HCT116 (cell line): ENCODE measurements at regions of chr3 and their contacts with region 1.

Region 1: GRCh38 chr3:19866751-19867347 is 67.2 kb downstream of the EFHB start:
- DNase-seq: peak; percentile 24
- ATAC-seq: peak; percentile 88
- H3K4me3 ChIP-seq: no peak overlapping the region
- H3K27ac ChIP-seq: no peak overlapping the region
- H3K4me1 ChIP-seq: no peaks in the 10 kb centered on the region
- H3K27me3 ChIP-seq: peaks cover 16% of the 10 kb centered on the region; the same call in 1 of the 2 replicates
- CTCF ChIP-seq: peak; percentile 57 to 87 (median 74); a peak in 5 of 6 replicates
- POLR2A ChIP-seq: no peak
- RAD21 ChIP-seq: peak; percentile 81

Region 2: DNA sequence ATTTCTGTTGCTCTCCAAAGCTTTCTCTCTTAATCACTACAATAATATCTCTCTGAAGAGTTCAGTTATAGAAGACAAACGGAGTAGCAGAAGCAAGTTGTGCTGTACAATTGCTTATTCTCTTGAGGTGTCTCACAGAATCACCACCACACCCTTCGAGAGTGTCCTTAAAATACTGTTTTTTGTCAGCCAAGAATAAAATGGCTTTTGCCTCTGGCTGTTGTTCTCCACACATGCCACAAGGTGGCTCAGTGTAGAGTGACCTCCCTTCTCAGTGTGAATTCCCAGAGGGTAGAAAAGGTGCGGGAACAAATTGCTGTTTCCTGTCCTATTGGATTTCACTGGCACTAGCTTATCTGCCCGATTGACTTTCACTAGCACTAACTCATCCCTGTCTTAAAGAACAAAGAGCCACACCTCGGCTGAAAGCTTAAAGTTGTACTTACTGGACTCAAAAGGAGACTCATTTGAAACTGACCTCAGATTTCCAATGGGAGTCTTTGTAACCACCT is 1307.5 kb before region 1 on chr3:
- CTCF ChIA-PET with region 1: no interaction called
- POLR2A ChIA-PET with region 1: no interaction called
- RAD21 ChIA-PET with region 1: no interaction called
- intact Hi-C with region 1: loop called (anchors 1 kb)
- DNase-seq: peak; percentile 21
- ATAC-seq: peak; percentile 73
- H3K4me3 ChIP-seq: no peak overlapping the region
- H3K27ac ChIP-seq: no peak overlapping the region
- H3K4me1 ChIP-seq: no peaks in the 10 kb centered on the region
- H3K27me3 ChIP-seq: peaks cover 14% of the 10 kb centered on the region; the same call in 1 of the 2 replicates
- CTCF ChIP-seq: peak; percentile 32 to 64 (median 63); a peak in 4 of 6 replicates
- POLR2A ChIP-seq: no peak
- RAD21 ChIP-seq: peak; percentile 47

Region 3: GRCh38 chr3:18847583-18848197 is 1019.2 kb before region 1 on chr3:
- CTCF ChIA-PET with region 1: interaction called, 3 read pairs
- POLR2A ChIA-PET with region 1: no interaction called
- RAD21 ChIA-PET with region 1: no interaction called
- intact Hi-C with region 1: loop called (anchors 5 kb)
- DNase-seq: peak; percentile 6
- ATAC-seq: peak; percentile 74
- H3K4me3 ChIP-seq: no peak overlapping the region
- H3K27ac ChIP-seq: no peak overlapping the region
- H3K4me1 ChIP-seq: no peaks in the 10 kb centered on the region
- H3K27me3 ChIP-seq: no peaks in the 10 kb centered on the region
- CTCF ChIP-seq: peak in 2 of 3 experiments; percentile 29 to 50; a peak in 3 of 6 replicates
- POLR2A ChIP-seq: no peak
- RAD21 ChIP-seq: 0 out of 2 replicates have a peak, but pooled peaks have one; percentile 8

Region 4: GRCh38 chr3:19046440-19046839 is 820.4 kb before region 1 on chr3:
- CTCF ChIA-PET with region 1: no interaction called
- POLR2A ChIA-PET with region 1: no interaction called
- RAD21 ChIA-PET with region 1: no interaction called
- intact Hi-C with region 1: loop called (anchors 5 kb)
- DNase-seq: no peak
- ATAC-seq: no peak
- H3K4me3 ChIP-seq: no peak overlapping the region
- H3K27ac ChIP-seq: no peak overlapping the region
- H3K4me1 ChIP-seq: no peaks in the 10 kb centered on the region
- H3K27me3 ChIP-seq: no peaks in the 10 kb centered on the region
- CTCF ChIP-seq: no peak
- POLR2A ChIP-seq: no peak
- RAD21 ChIP-seq: peak; percentile 24; the same call in 1 of the 2 replicates

Region 5: DNA sequence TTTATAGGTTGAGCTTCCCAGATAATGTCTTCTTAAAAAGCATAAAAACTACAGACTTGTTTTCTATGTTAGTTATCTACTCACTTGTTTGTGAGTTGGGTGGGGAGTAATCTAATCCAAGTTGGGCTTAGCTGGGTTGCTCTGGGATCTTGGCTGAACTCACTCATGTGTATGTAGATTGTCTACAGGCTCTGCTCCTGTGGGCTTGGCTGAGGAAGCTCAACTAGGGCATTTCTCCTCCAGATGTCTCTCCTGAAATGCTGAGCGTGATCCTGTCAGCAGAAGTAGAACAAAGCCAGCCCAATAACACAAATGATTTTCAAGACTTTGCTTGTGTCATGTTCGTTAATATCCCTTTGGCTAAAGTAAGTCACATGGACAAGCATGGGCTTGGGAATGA is 701.2 kb before region 1 on chr3:
- CTCF ChIA-PET with region 1: no interaction called
- POLR2A ChIA-PET with region 1: no interaction called
- RAD21 ChIA-PET with region 1: no interaction called
- intact Hi-C with region 1: loop called (anchors 10 kb)
- DNase-seq: no peak
- ATAC-seq: no peak
- H3K4me3 ChIP-seq: no peak overlapping the region
- H3K27ac ChIP-seq: no peak overlapping the region
- H3K4me1 ChIP-seq: no peaks in the 10 kb centered on the region
- H3K27me3 ChIP-seq: no peaks in the 10 kb centered on the region
- CTCF ChIP-seq: no peak
- POLR2A ChIP-seq: no peak
- RAD21 ChIP-seq: no peak

Region 6: DNA sequence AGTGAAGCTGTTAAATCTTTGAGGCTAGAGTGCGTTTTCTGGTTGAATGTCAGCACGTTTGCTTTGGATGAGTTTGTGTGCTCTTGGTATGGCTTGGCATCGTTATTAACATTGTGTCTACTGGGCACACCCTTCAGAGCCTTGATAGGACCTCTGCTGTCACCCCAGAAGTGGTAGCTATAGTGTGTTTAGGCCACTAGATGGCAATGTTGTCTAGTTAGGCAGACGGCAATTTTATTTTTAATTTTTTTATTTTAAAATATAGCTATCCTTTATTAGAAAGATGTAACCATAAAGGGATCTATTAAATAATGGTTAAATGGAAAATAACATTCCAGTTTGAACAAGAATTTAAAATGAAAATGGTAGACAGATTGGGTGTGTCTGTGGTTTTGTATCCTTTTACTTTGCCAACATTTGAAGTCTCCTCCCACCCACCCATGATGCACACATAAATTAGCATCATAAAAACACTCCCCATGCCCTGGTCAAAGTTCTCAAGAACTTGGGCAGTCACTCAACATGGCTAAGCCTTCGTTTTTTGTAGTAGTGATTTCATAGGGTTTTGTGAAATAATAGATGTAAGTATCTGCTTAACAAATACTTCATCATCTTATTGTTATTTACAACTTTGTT is 517.8 kb before region 1 on chr3:
- CTCF ChIA-PET with region 1: interaction called, 31 read pairs
- POLR2A ChIA-PET with region 1: interaction called, 3 read pairs
- RAD21 ChIA-PET with region 1: interaction called in 1 of 2 experiments, 3 read pairs
- intact Hi-C with region 1: loop called (anchors 1 kb)
- DNase-seq: peak; percentile 13
- ATAC-seq: peak; percentile 67
- H3K4me3 ChIP-seq: no peak overlapping the region
- H3K27ac ChIP-seq: no peak overlapping the region
- H3K4me1 ChIP-seq: no peaks in the 10 kb centered on the region
- H3K27me3 ChIP-seq: no peaks in the 10 kb centered on the region
- CTCF ChIP-seq: peak; percentile 23 to 44 (median 40); a peak in 5 of 6 replicates
- POLR2A ChIP-seq: no peak
- RAD21 ChIP-seq: peak; percentile 53